Vagina (tissue), 2 donors: ENCODE measurements at regions of chr5 and their contacts with region 1.

Region 1: GRCh38 chr5:61586096-61587084 is 254.3 kb downstream of the ZSWIM6 start:
- DNase-seq: no peak
- H3K4me3 ChIP-seq: no peak overlapping the region
- H3K27ac ChIP-seq: no peak overlapping the region
- H3K4me1 ChIP-seq: peaks cover 7% of the 10 kb centered on the region
- H3K27me3 ChIP-seq: no peaks in the 10 kb centered on the region
- CTCF ChIP-seq: no peak
- POLR2A ChIP-seq: no peak

Region 2: DNA sequence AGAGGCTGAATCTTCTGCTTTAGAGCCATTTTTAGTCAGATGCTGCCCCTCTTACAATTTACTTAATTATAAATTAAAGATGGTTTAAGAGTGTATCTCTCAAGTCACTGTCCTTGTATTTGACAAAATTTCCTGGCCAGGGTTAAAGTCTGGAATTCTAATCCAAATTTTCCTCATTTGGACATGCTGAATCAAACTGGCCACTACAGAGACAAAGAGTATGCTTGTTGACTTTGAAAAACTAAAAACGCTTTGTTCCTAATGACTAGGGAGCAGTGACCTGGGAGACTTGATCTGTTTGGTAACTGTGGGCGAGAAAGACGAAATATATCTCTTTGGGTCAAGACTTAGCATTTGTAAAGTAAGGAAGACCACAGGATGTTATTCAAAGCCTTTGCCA is 48.9 kb after region 1 on chr5:
- intact Hi-C with region 1: loop called (anchors 1 kb)
- DNase-seq: no peak
- H3K4me3 ChIP-seq: no peak overlapping the region
- H3K27ac ChIP-seq: no peak overlapping the region
- H3K4me1 ChIP-seq: peaks cover 7% of the 10 kb centered on the region
- H3K27me3 ChIP-seq: no peaks in the 10 kb centered on the region
- CTCF ChIP-seq: no peak
- POLR2A ChIP-seq: no peak